ENCODE measurements at regions of chr3 and their contacts with region 1.

Region 1: GRCh38 chr3:191412759-191413158 is 48.2 kb upstream of the PYDC2 start:
- ATAC-seq: peak in 4 of 8 experiments; percentile 52 to 78 (median 59)
- H3K4me3 ChIP-seq: no peak overlapping the region
- H3K27ac ChIP-seq: no peak overlapping the region
- H3K4me1 ChIP-seq: no peaks in the 10 kb centered on the region

Region 2: DNA sequence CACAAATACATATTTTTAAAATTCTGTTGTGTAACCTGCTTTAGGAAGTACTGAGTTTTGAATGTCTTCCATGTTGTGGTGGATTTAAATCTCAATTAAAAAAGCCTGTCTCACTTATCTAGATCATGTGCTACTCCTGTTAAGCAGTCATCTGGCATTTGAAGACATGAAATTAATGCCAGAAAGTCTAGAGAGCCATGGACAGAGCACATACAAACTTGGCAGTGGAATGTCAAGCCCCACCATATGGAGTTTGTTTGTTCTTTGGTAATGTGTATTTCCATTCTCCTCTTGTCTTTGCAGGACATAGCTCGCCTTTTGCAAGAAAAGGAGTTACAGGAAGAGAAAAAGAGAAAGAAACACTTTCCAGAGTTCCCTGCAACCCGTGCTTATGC is 43.1 kb before region 1 on chr3:
- in situ Hi-C with region 1: no loop called
- ATAC-seq: peak in 3 of 8 experiments; percentile 33 to 81 (median 62)
- H3K4me3 ChIP-seq: no peak overlapping the region
- H3K27ac ChIP-seq: no peak overlapping the region
- H3K4me1 ChIP-seq: no peaks in the 10 kb centered on the region

Region 3: DNA sequence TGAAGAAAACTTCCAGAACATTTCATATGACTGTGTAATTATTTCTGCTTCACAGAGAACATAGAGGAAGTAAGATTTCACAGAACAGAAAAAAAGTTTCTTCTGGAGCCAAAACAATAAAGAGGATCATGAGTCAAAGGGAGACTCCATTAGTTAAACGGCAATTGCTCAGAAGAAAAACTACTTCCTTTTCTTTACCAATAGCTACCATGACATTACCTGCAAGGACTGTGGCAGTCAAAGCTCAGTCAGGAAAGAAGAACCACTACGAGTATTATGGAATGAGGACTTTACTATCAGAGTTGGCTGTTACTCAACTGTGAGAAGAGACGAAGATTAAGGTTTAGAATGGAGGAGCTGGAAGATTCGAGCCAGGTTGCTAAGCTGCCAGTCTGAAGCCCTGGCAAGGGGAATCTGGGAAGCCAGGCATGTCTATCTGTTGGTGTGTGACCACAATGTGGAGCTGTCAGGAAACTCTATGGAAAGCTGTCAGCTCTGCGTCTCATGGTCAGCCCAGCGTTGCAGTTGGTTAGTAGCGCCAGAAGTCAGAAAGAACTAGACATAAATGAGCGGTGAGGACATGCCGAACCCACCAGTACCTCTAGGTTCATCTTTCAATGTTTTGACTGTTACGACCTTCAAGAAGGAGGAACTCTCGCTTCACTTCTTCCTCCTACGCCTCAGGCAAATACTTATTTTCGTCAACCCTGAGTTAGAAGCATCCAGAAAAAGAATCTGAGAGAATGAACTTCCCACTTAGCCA is 710.3 kb after region 1 on chr3:
- in situ Hi-C with region 1: loop called in 1 of 9 experiments (anchors 25 kb)
- ATAC-seq: peak in 1 of 8 experiments; percentile 45
- H3K4me3 ChIP-seq: no peak overlapping the region
- H3K27ac ChIP-seq: no peak overlapping the region
- H3K4me1 ChIP-seq: no peaks in the 10 kb centered on the region

Region 4: DNA sequence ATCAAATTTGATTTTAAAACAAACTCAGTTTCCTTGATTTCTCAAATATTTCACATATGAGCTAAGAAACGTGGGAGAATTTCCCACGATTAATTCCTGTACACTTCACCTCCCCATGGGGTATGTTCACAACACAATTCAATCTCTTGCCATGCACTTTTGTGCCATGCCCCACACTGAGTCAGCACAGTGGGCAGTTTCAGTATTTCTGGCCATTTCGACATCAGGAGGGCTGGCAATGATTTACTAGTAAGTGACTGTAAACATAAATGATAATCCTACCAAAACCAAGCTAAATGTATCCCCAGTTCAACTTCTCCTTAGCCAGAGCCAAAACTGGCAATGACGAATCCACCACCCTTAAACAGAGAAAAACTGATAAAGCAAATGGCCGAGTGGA is 1020.9 kb after region 1 on chr3:
- in situ Hi-C with region 1: loop called in 5 of 9 experiments (anchors 10 to 25 kb)
- ATAC-seq: peak in 1 of 8 experiments; percentile 18
- H3K4me3 ChIP-seq: no peak overlapping the region
- H3K27ac ChIP-seq: no peak overlapping the region
- H3K4me1 ChIP-seq: no peaks in the 10 kb centered on the region

Region 5: GRCh38 chr3:192444096-192444790 is 1031.5 kb after region 1 on chr3:
- in situ Hi-C with region 1: loop called in 8 of 9 experiments (anchors 10 to 25 kb)
- ATAC-seq: peak; percentile 68 to 92 (median 87)
- H3K4me3 ChIP-seq: no peak overlapping the region
- H3K27ac ChIP-seq: no peak overlapping the region
- H3K4me1 ChIP-seq: peaks cover 21 to 26% of the 10 kb centered on the region in 2 donors